GM12878 (cell line): ENCODE measurements at regions of chr5 and their contacts with region 1.

Region 1: GRCh38 chr5:169742771-169743296 is 105.8 kb downstream of the DOCK2 start:
- DNase-seq: no peak
- ATAC-seq: no peak
- H3K4me3 ChIP-seq: no peak overlapping the region
- H3K27ac ChIP-seq: no peak overlapping the region
- H3K4me1 ChIP-seq: peaks cover 9% of the 10 kb centered on the region
- H3K27me3 ChIP-seq: no peaks in the 10 kb centered on the region
- CTCF ChIP-seq: no peak
- EP300 ChIP-seq: no peak
- POLR2A ChIP-seq: no peak
- RAD21 ChIP-seq: no peak

Region 2: DNA sequence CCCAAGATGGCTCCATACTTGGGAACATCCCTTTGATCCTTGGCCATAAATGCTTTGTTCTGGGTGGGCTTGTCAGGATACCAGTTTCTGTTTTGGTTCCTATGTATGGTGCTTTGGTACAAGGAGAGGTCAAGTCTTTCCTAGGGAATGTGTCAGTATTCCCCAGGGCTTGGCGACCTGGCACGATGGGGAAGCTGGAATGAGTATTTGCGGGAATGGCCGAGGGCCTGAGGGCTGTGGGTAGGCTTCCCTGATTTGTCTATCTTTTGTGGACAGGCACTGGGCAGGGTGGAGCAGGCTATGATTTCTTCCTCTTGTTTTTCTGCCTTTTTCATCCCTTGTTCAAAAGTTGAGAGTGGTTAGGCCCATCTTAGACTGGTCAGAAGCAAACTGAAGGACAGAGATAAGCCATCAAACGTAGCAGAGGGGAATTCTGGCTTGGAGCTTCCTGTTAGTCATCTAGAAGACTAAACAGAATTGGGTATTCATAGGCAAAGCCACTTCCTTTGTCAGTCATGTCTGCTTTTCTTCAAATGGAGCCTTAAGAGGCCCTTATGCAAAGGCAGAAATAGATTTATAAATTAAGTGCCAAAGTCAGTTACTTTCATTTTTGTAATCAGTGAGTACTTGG is 92.0 kb before region 1 on chr5:
- CTCF ChIA-PET with region 1: no interaction called
- POLR2A ChIA-PET with region 1: no interaction called
- RAD21 ChIA-PET with region 1: no interaction called
- SMC1A ChIA-PET with region 1: no interaction called
- in situ Hi-C with region 1: no loop called
- intact Hi-C with region 1: no loop called
- DNase-seq: peak; percentile 76
- ATAC-seq: peak; percentile 70
- H3K4me3 ChIP-seq: peak overlapping the region; percentile 50; the same call in 1 of the 2 replicates
- H3K27ac ChIP-seq: peak overlapping the region; percentile 98
- H3K4me1 ChIP-seq: peaks cover 92% of the 10 kb centered on the region
- H3K27me3 ChIP-seq: no peaks in the 10 kb centered on the region
- CTCF ChIP-seq: no peak
- EP300 ChIP-seq: peak; percentile 7 to 68; a peak in 1 of 4 replicates
- POLR2A ChIP-seq: no peak
- RAD21 ChIP-seq: 0 out of 2 replicates have a peak, but pooled peaks have one; percentile 3

Region 3: DNA sequence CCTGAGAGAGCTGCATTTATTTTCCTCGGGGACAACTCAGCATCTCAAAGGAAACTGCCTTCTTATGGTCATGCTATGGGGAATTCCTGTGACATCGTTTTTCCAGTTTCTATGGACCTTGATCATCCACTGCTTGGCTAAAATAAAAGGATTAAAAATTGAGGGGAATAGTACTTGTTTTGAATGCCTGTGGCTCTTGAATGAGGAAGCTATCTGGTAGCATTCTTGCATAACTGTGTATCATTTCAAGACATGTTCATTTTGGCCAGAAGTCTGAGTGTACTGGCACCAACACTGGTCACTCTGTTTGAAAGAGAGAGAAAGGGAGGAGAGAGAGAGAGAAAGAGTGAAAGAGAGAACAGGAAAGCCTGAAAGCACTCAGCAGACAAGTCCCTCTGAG is 11.0 kb after region 1 on chr5:
- CTCF ChIA-PET with region 1: interaction called, 8 read pairs
- POLR2A ChIA-PET with region 1: interaction called, 7 read pairs
- RAD21 ChIA-PET with region 1: no interaction called
- SMC1A ChIA-PET with region 1: interaction called, 202 read pairs
- in situ Hi-C with region 1: no loop called
- intact Hi-C with region 1: no loop called
- DNase-seq: no peak
- ATAC-seq: peak; percentile 18; the same call in 2 of the 3 replicates
- H3K4me3 ChIP-seq: no peak overlapping the region
- H3K27ac ChIP-seq: no peak overlapping the region
- H3K4me1 ChIP-seq: no peaks in the 10 kb centered on the region
- H3K27me3 ChIP-seq: no peaks in the 10 kb centered on the region
- CTCF ChIP-seq: no peak
- EP300 ChIP-seq: no peak
- POLR2A ChIP-seq: no peak
- RAD21 ChIP-seq: no peak

Region 4: GRCh38 chr5:169763376-169764017 is 20.7 kb after region 1 on chr5:
- CTCF ChIA-PET with region 1: interaction called, 5 read pairs
- POLR2A ChIA-PET with region 1: interaction called, 3 read pairs
- RAD21 ChIA-PET with region 1: interaction called, 78 read pairs
- SMC1A ChIA-PET with region 1: interaction called, 202 read pairs
- in situ Hi-C with region 1: no loop called
- intact Hi-C with region 1: no loop called
- DNase-seq: peak; percentile 45
- ATAC-seq: peak; percentile 87
- H3K4me3 ChIP-seq: no peak overlapping the region
- H3K27ac ChIP-seq: no peak overlapping the region
- H3K4me1 ChIP-seq: peaks cover 5% of the 10 kb centered on the region; the same call in 1 of the 2 replicates
- H3K27me3 ChIP-seq: no peaks in the 10 kb centered on the region
- CTCF ChIP-seq: no peak
- EP300 ChIP-seq: 0 out of 4 replicates have a peak, but pooled peaks of 1 of the 2 experiments have one; percentile 19
- POLR2A ChIP-seq: no peak
- RAD21 ChIP-seq: no peak

Region 5: DNA sequence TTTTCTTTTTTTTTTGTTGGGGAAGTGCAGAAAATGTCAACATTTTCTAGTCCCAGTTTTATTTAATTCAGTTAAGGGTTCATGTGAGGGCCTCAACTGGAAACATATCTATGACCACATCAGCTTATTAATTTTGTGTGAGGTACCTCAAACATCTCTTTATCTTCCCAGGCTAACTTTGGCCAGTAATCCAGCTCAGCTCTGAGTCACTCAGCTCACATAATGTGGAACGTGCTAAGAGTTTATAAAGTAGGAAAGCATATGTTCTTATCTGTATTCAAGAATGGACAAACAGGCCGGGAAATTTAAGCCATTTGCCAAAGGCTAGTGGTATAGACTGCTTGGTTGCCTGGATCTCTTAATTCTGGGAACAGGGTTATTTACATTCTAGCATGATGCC is 119.1 kb after region 1 on chr5:
- CTCF ChIA-PET with region 1: no interaction called
- POLR2A ChIA-PET with region 1: no interaction called
- RAD21 ChIA-PET with region 1: no interaction called
- SMC1A ChIA-PET with region 1: no interaction called
- in situ Hi-C with region 1: no loop called
- intact Hi-C with region 1: no loop called
- DNase-seq: no peak
- ATAC-seq: no peak
- H3K4me3 ChIP-seq: no peak overlapping the region
- H3K27ac ChIP-seq: no peak overlapping the region
- H3K4me1 ChIP-seq: 0 out of 2 replicates have a peak, but pooled peaks cover 3% of the 10 kb centered on the region
- H3K27me3 ChIP-seq: no peaks in the 10 kb centered on the region
- CTCF ChIP-seq: no peak
- EP300 ChIP-seq: no peak
- POLR2A ChIP-seq: no peak
- RAD21 ChIP-seq: no peak

Region 6: GRCh38 chr5:170183816-170184687 is 441.2 kb after region 1 on chr5:
- CTCF ChIA-PET with region 1: no interaction called
- POLR2A ChIA-PET with region 1: no interaction called
- RAD21 ChIA-PET with region 1: no interaction called
- SMC1A ChIA-PET with region 1: no interaction called
- in situ Hi-C with region 1: no loop called
- intact Hi-C with region 1: no loop called
- DNase-seq: no peak
- ATAC-seq: peak; percentile 96
- H3K4me3 ChIP-seq: no peak overlapping the region
- H3K27ac ChIP-seq: no peak overlapping the region
- H3K4me1 ChIP-seq: no peaks in the 10 kb centered on the region
- H3K27me3 ChIP-seq: no peaks in the 10 kb centered on the region; a peak in 1 of 4 replicates
- CTCF ChIP-seq: peak; percentile 73 to 85 (median 84)
- EP300 ChIP-seq: no peak
- POLR2A ChIP-seq: no peak
- RAD21 ChIP-seq: peak; percentile 82

Region 7: GRCh38 chr5:170357955-170358444 is 615.2 kb after region 1 on chr5:
- CTCF ChIA-PET with region 1: no interaction called
- POLR2A ChIA-PET with region 1: no interaction called
- RAD21 ChIA-PET with region 1: no interaction called
- SMC1A ChIA-PET with region 1: no interaction called
- in situ Hi-C with region 1: no loop called
- intact Hi-C with region 1: no loop called
- DNase-seq: no peak
- ATAC-seq: peak; percentile 46
- H3K4me3 ChIP-seq: no peak overlapping the region
- H3K27ac ChIP-seq: no peak overlapping the region
- H3K4me1 ChIP-seq: peaks cover 6% of the 10 kb centered on the region
- H3K27me3 ChIP-seq: peaks cover 2 to 8% of the 10 kb centered on the region in 2 experiments; a peak in 3 of 4 replicates
- CTCF ChIP-seq: no peak
- EP300 ChIP-seq: no peak
- POLR2A ChIP-seq: no peak
- RAD21 ChIP-seq: no peak